ENCODE measurements at regions of chr2 and their contacts with region 1.

Region 1: DNA sequence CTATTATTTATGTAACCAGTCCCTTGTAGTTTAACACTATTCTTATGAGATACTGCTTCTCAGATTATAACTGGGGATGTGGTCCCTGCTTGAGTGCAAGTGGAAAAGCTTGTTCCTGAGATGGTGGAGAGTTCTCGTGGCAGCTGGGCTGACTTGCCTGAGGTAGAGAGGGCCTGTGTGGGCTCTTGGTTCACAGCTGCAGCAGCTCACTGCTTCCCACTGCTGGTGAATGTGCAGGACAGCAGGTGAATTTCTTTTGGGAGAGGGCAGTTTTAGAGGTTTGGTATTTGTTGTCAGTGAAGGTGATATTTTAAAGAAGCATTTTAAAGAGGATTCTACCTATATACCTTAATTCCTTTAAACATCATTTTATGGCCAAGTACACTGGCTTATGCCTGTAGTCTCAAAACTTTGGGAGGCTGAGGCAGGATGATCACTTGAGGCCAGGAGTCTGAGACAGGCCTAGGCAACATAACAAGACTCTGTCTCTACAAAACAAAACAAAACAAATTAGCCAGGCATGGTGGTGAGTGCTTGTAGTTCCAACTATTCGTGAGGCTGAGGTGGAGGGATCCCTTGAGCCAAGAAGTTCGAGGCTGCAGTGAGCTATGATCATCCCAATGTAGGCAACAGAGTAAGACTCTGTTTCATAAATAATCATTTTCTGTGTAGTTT is 94.8 kb downstream of the MTA3 start:
- DNase-seq: peak; percentile 82
- H3K4me3 ChIP-seq: no peak overlapping the region
- H3K27ac ChIP-seq: no peak overlapping the region
- H3K4me1 ChIP-seq: no peaks in the 10 kb centered on the region
- H3K27me3 ChIP-seq: no peaks in the 10 kb centered on the region
- CTCF ChIP-seq: peak; percentile 94 to 97
- POLR2A ChIP-seq: no peak

Region 2: GRCh38 chr2:42132966-42133641 is 530.1 kb before region 1 on chr2:
- CTCF ChIA-PET with region 1: no interaction called
- POLR2A ChIA-PET with region 1: no interaction called
- dilution Hi-C with region 1: no loop called
- intact Hi-C with region 1: no loop called
- DNase-seq: peak; percentile 89
- H3K4me3 ChIP-seq: no peak overlapping the region
- H3K27ac ChIP-seq: no peak overlapping the region
- H3K4me1 ChIP-seq: peaks cover 34% of the 10 kb centered on the region
- H3K27me3 ChIP-seq: peaks cover 0 to 3% of the 10 kb centered on the region in 2 experiments
- CTCF ChIP-seq: no peak
- POLR2A ChIP-seq: no peak

Region 3: GRCh38 chr2:42360890-42361727 is 302.1 kb before region 1 on chr2 and contains the start of gene COX7A2L:
- CTCF ChIA-PET with region 1: interaction called, 3 read pairs
- POLR2A ChIA-PET with region 1: no interaction called
- dilution Hi-C with region 1: no loop called
- intact Hi-C with region 1: loop called (anchors 2 kb)
- DNase-seq: peak; percentile 97
- H3K4me3 ChIP-seq: peak within 1 kb of the TSS; percentile 61 to 92 (median 77)
- H3K27ac ChIP-seq: peak within 1 kb of the TSS; percentile 97
- H3K4me1 ChIP-seq: peaks cover 18% of the 10 kb centered on the region
- H3K27me3 ChIP-seq: peaks cover 1 to 2% of the 10 kb centered on the region in 2 experiments
- CTCF ChIP-seq: peak in 1 of 2 donors; percentile 33
- POLR2A ChIP-seq: peak; percentile 73
- total RNA-seq, gene COX7A2L: 94.2 and 101 TPM in 2 replicates

Region 4: DNA sequence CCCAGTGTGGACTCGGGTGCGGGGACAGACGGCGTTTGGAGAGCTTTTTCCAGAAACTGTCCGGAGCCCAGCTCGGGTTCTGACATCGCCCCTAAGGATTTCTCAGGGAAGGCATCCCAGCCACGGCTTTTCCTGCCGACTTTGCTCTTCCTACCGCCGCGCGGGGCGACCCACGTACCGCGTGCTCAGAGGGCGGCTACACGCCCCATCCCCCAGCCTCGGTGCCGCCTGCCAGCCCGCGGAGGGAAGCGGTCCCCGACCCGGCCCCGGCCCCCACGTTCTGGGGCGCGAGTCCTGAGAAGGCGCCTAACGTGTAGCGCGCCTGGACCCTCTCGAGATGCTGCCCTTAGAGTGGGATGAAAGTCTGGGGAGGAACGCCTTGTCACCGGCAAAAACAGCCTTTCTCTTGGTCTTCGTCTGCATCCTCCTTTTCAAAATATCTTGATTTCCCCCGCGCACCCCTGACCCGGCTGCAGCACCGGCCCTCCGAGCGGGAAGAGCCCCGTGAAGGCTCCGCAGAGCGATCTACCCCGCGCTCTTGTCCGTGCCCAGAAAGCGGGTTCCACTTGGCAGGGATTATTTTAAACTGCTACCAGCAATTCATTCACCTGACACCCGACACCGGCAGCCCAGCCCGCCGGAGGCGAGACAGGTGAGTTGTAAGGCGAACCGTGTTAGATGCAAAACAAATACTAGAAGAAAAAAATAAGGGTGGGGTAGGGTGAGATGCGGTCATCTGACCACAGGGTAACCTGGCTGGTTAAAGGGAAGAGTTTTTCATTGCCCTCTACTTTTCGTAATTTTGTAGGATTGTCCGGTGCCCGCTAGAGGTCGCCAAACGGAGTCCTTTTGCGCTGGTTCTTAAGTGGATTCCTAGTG is 168.6 kb before region 1 on chr2:
- CTCF ChIA-PET with region 1: interaction called, 40 read pairs
- POLR2A ChIA-PET with region 1: no interaction called
- dilution Hi-C with region 1: no loop called
- intact Hi-C with region 1: loop called (anchors 1 kb)
- DNase-seq: peak; percentile 83
- H3K4me3 ChIP-seq: peak overlapping the region; percentile 20 to 70 (median 46)
- H3K27ac ChIP-seq: no peak overlapping the region
- H3K4me1 ChIP-seq: peaks cover 6% of the 10 kb centered on the region
- H3K27me3 ChIP-seq: peaks cover 13 to 23% of the 10 kb centered on the region in 2 experiments
- CTCF ChIP-seq: peak; percentile 81 to 89
- POLR2A ChIP-seq: no peak

Region 5: GRCh38 chr2:42545023-42545721 is 118.1 kb before region 1 on chr2:
- CTCF ChIA-PET with region 1: interaction called, 13 read pairs
- POLR2A ChIA-PET with region 1: no interaction called
- dilution Hi-C with region 1: no loop called
- intact Hi-C with region 1: no loop called
- DNase-seq: no peak
- H3K4me3 ChIP-seq: no peak overlapping the region
- H3K27ac ChIP-seq: no peak overlapping the region
- H3K4me1 ChIP-seq: no peaks in the 10 kb centered on the region
- H3K27me3 ChIP-seq: no peaks in the 10 kb centered on the region
- CTCF ChIP-seq: no peak
- POLR2A ChIP-seq: no peak

Region 6: DNA sequence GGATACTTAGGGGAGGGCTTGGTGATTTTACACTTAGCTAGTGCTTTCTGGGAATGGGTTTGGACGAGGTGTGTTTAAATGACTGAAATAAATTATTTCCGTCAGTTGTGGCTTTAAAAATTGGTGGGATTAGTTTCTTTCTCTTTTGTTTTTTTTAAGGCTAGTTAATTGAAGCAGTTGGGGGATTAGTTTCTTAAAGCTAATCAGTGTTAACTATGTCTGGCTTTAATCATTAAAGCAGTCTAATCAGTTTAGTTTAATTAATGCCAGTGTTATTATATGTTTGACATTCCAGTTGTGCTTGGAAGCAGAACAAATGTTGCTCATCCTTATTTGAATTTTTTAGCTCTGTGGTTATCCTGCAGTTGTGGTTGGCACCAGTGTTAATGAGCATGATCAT is 84.6 kb before region 1 on chr2:
- CTCF ChIA-PET with region 1: interaction called, 11 read pairs
- POLR2A ChIA-PET with region 1: no interaction called
- dilution Hi-C with region 1: no loop called
- intact Hi-C with region 1: no loop called
- DNase-seq: no peak
- H3K4me3 ChIP-seq: no peak overlapping the region
- H3K27ac ChIP-seq: no peak overlapping the region
- H3K4me1 ChIP-seq: no peaks in the 10 kb centered on the region
- H3K27me3 ChIP-seq: no peaks in the 10 kb centered on the region
- CTCF ChIP-seq: no peak
- POLR2A ChIP-seq: no peak

Region 7: GRCh38 chr2:42806786-42807185 is 143.5 kb after region 1 on chr2:
- CTCF ChIA-PET with region 1: no interaction called
- POLR2A ChIA-PET with region 1: no interaction called
- dilution Hi-C with region 1: no loop called
- intact Hi-C with region 1: no loop called
- DNase-seq: no peak
- H3K4me3 ChIP-seq: no peak overlapping the region
- H3K27ac ChIP-seq: no peak overlapping the region
- H3K4me1 ChIP-seq: peaks cover 11% of the 10 kb centered on the region
- H3K27me3 ChIP-seq: peaks cover 8 to 12% of the 10 kb centered on the region in 2 experiments
- CTCF ChIP-seq: no peak
- POLR2A ChIP-seq: no peak